ENCODE measurements at regions of chr2 and their contacts with region 1.

Region 1: DNA sequence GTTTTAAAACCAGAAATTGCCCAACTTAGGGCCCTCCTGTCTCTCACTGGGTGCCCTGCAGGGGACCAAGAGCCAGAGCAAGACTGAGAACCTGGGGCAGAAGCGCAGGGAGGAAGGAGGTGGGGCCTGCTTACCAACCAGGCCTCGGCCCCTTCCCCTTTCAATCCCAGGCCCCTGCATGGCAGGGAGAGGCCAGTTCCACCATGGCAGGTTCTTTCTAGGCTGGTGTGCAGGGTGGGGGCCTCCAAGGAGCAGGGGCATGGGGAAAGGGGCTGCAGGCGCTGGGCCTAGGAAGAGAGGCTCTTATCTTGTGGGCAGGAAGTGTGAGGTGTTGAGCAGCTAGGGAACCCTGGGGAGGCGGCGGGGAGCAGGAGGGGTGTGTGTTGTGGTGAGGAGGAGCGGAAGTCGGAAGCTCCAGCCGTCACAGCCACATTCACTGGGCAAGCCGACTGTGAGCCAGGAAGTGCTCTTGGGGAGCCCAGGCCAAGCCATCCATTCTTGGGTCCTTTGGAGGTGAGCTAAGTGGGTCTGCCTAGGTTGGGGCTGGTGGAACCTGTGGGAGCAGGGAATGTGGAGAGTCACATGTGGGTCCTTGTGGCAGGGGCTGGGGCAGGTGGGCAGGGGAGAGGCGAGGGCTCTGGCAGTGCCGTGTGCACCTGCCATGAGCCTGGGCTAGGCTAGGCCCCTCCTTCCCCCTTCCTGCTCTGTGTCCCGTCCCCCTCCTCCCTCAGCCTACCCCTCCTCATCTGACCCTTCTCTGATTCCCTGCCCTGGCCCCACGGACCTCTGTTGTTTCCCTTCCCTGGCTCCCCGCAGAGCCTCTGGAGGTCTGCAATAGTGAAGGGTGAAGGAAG is at the start of gene PSD4:
- DNase-seq: peak; percentile 67
- ATAC-seq: peak; percentile 87
- H3K4me3 ChIP-seq: peak within 1 kb of the TSS; percentile 95
- H3K27ac ChIP-seq: peak within 1 kb of the TSS; percentile 96
- H3K4me1 ChIP-seq: peaks cover 32% of the 10 kb centered on the region
- H3K27me3 ChIP-seq: no peaks in the 10 kb centered on the region
- CTCF ChIP-seq: 0 out of 6 replicates have a peak, but pooled peaks of 1 of the 3 experiments have one; percentile 12
- EP300 ChIP-seq: no peak
- POLR2A ChIP-seq: peak; percentile 96
- RAD21 ChIP-seq: no peak
- polyA plus RNA-seq, gene PSD4: 0.68 to 1.7 TPM

Region 2: GRCh38 chr2:113041871-113042508 is 131.8 kb before region 1 on chr2:
- CTCF ChIA-PET with region 1: no interaction called
- POLR2A ChIA-PET with region 1: no interaction called
- RAD21 ChIA-PET with region 1: no interaction called
- SMC1A ChIA-PET with region 1: no interaction called
- in situ Hi-C with region 1: no loop called
- intact Hi-C with region 1: no loop called
- DNase-seq: no peak
- ATAC-seq: no peak
- H3K4me3 ChIP-seq: no peak overlapping the region
- H3K27ac ChIP-seq: no peak overlapping the region
- H3K4me1 ChIP-seq: no peaks in the 10 kb centered on the region
- H3K27me3 ChIP-seq: peaks cover 0 to 1% of the 10 kb centered on the region in 2 experiments; a peak in 1 of 4 replicates
- CTCF ChIP-seq: peak in 1 of 3 experiments; percentile 18; a peak in 1 of 6 replicates
- EP300 ChIP-seq: no peak
- POLR2A ChIP-seq: no peak
- RAD21 ChIP-seq: no peak

Region 3: GRCh38 chr2:113198790-113199612 is 25.2 kb after region 1 on chr2:
- CTCF ChIA-PET with region 1: interaction called, 106 read pairs
- POLR2A ChIA-PET with region 1: interaction called, 11 read pairs
- RAD21 ChIA-PET with region 1: interaction called, 22 read pairs
- SMC1A ChIA-PET with region 1: interaction called, 21 read pairs
- in situ Hi-C with region 1: no loop called
- intact Hi-C with region 1: no loop called
- DNase-seq: no peak
- ATAC-seq: peak; percentile 89
- H3K4me3 ChIP-seq: no peak overlapping the region
- H3K27ac ChIP-seq: no peak overlapping the region
- H3K4me1 ChIP-seq: no peaks in the 10 kb centered on the region
- H3K27me3 ChIP-seq: no peaks in the 10 kb centered on the region
- CTCF ChIP-seq: peak; percentile 54 to 80 (median 75)
- EP300 ChIP-seq: no peak
- POLR2A ChIP-seq: no peak
- RAD21 ChIP-seq: peak; percentile 40

Region 4: DNA sequence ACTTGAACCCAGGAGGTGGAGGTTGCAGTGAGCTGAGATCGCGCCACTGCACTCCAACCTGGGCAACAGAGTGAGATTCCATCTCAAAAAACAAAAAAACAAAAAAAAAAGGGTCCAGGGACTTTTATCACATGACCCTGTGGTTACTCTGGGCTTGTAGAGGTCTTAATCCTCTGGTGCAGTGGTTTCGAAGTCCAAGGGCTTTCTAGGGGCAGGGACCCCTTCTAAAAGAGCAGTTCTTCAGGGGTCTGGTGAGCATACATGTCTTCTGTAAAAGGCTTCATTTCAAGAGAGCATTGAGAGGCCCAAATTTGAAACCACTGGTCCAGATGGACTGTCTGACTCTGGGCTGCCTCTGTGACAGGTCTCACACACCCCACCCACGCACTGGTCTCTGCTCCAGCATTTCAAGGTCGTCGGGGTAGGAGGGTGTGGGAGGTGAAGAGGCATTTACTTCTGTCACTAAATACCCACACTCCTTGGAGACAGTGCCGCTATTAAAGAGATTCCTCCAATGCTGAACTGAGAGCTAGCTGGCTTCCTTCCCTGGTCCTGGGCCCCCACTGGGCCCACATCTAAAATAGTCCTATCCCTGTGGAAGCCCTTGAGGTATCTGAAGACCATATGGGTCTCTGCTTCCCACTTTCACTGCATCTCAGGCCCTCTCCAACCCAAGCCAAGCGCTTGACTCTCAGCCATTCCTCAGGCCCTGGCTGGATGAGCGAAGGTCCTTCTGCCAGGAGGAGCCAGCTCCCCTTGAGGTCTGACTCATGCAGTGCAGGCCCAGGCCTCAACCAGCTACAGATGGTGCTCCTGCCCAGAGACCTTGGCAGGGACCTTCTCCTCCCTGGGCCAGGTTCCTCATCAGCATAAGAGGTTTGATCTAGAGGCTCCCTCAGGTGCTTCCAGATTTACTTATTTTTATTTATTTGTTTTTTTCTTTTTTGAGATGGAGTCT is 60.1 kb after region 1 on chr2:
- CTCF ChIA-PET with region 1: interaction called, 4 read pairs
- POLR2A ChIA-PET with region 1: interaction called, 10 read pairs
- RAD21 ChIA-PET with region 1: interaction called, 9 read pairs
- SMC1A ChIA-PET with region 1: interaction called, 5 read pairs
- in situ Hi-C with region 1: no loop called
- intact Hi-C with region 1: no loop called
- DNase-seq: no peak
- ATAC-seq: peak; percentile 63
- H3K4me3 ChIP-seq: no peak overlapping the region
- H3K27ac ChIP-seq: no peak overlapping the region
- H3K4me1 ChIP-seq: peaks cover 2% of the 10 kb centered on the region; the same call in 1 of the 2 replicates
- H3K27me3 ChIP-seq: no peaks in the 10 kb centered on the region; a peak in 2 of 4 replicates
- CTCF ChIP-seq: peak in 2 of 3 experiments; percentile 25 to 31; a peak in 2 of 6 replicates
- EP300 ChIP-seq: no peak
- POLR2A ChIP-seq: no peak
- RAD21 ChIP-seq: no peak

Measured in GM12878 (cell line).